Naive thymus-derived CD4-positive, alpha-beta T cell (primary cell): ENCODE measurements at regions of chrX and their contacts with region 1.

Region 1: DNA sequence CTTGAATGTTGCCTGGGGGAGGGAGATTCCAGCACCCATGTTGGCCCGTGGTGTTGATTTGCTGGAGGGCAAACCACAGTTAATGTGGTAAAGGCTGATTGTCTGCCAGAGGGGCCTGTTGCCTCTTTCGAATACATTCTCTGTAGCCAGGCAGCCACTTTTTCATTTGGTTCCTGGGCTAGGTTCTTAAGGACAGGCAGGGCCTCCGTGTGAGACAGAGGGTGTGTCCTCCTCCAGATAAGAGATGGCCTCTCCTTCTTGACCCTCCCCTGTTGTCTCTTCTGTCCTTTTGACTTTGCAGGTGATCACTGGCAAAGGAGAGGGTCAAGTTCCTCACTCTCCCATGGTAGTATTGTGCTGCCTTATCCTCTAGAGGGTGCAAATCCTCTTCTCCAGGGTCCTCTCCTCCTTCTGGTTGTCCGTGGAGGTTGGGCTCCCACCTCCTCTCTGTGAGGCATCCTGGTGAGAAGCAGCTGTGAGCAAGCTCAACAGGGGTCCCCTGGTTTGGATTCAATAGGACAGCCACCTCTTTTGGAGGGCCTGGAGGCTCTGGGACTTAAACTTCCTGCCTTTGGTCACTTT is 44.9 kb downstream of the ZNF182 start:
- DNase-seq: peak in 7 of 9 donors; percentile 17 to 53 (median 28)
- ATAC-seq: peak; percentile 79
- H3K4me3 ChIP-seq: no peak overlapping the region
- H3K4me3 Mint-ChIP-seq: no peak overlapping the region
- H3K27ac ChIP-seq: no peak overlapping the region
- H3K27ac Mint-ChIP-seq: no peak overlapping the region
- H3K4me1 ChIP-seq: no peaks in the 10 kb centered on the region
- H3K4me1 Mint-ChIP-seq: peaks cover 0 to 3% (median 0%) of the 10 kb centered on the region in 7 donors
- H3K27me3 ChIP-seq: no peaks in the 10 kb centered on the region
- H3K27me3 Mint-ChIP-seq: no peaks in the 10 kb centered on the region

Region 2: GRCh38 chrX:47836164-47837072 is 122.4 kb before region 1 on chrX and contains the start of gene ZNF81:
- CTCF ChIA-PET with region 1: no interaction called
- POLR2A ChIA-PET with region 1: no interaction called
- intact Hi-C with region 1: loop called (anchors 2 to 10 kb)
- DNase-seq: peak; percentile 73 to 91 (median 83)
- ATAC-seq: peak; percentile 96
- H3K4me3 ChIP-seq: peak within 1 kb of the TSS; percentile 67
- H3K4me3 Mint-ChIP-seq: peak within 1 kb of the TSS; percentile 96 to 99 (median 98)
- H3K27ac ChIP-seq: peak within 1 kb of the TSS; percentile 79
- H3K27ac Mint-ChIP-seq: peak within 1 kb of the TSS; percentile 94 to 99 (median 97)
- H3K4me1 ChIP-seq: peaks cover 4 to 6% of the 10 kb centered on the region in 2 donors
- H3K4me1 Mint-ChIP-seq: peaks cover 1 to 36% (median 26%) of the 10 kb centered on the region in 7 donors
- H3K27me3 ChIP-seq: no peaks in the 10 kb centered on the region
- H3K27me3 Mint-ChIP-seq: no peaks in the 10 kb centered on the region
- total RNA-seq, gene ZNF81: 11.0 to 14.7 (median 11.7) TPM

Region 3: GRCh38 chrX:47854474-47854873 is 104.4 kb before region 1 on chrX:
- CTCF ChIA-PET with region 1: no interaction called
- POLR2A ChIA-PET with region 1: no interaction called
- intact Hi-C with region 1: loop called in 1 of 2 experiments (anchors 2 kb)
- DNase-seq: peak in 7 of 9 donors; percentile 10 to 46 (median 32)
- ATAC-seq: peak; percentile 65
- H3K4me3 ChIP-seq: no peak overlapping the region
- H3K4me3 Mint-ChIP-seq: no peak overlapping the region
- H3K27ac ChIP-seq: no peak overlapping the region
- H3K27ac Mint-ChIP-seq: peak overlapping the region in 2 of 9 donors; percentile 11 to 51
- H3K4me1 ChIP-seq: no peaks in the 10 kb centered on the region
- H3K4me1 Mint-ChIP-seq: peaks cover 0 to 6% (median 4%) of the 10 kb centered on the region in 7 donors
- H3K27me3 ChIP-seq: no peaks in the 10 kb centered on the region
- H3K27me3 Mint-ChIP-seq: no peaks in the 10 kb centered on the region

Region 4: GRCh38 chrX:47900833-47901232 is 58.0 kb before region 1 on chrX:
- CTCF ChIA-PET with region 1: no interaction called
- POLR2A ChIA-PET with region 1: no interaction called
- intact Hi-C with region 1: no loop called
- DNase-seq: no peak
- ATAC-seq: no peak
- H3K4me3 ChIP-seq: no peak overlapping the region
- H3K4me3 Mint-ChIP-seq: no peak overlapping the region
- H3K27ac ChIP-seq: no peak overlapping the region
- H3K27ac Mint-ChIP-seq: no peak overlapping the region
- H3K4me1 ChIP-seq: no peaks in the 10 kb centered on the region
- H3K4me1 Mint-ChIP-seq: peaks cover 0 to 2% (median 0%) of the 10 kb centered on the region in 7 donors
- H3K27me3 ChIP-seq: no peaks in the 10 kb centered on the region
- H3K27me3 Mint-ChIP-seq: no peaks in the 10 kb centered on the region

Region 5: GRCh38 chrX:47918274-47918673 is 40.6 kb before region 1 on chrX:
- CTCF ChIA-PET with region 1: no interaction called
- POLR2A ChIA-PET with region 1: no interaction called
- intact Hi-C with region 1: no loop called
- DNase-seq: no peak
- ATAC-seq: no peak
- H3K4me3 ChIP-seq: no peak overlapping the region
- H3K4me3 Mint-ChIP-seq: no peak overlapping the region
- H3K27ac ChIP-seq: no peak overlapping the region
- H3K27ac Mint-ChIP-seq: no peak overlapping the region
- H3K4me1 ChIP-seq: no peaks in the 10 kb centered on the region
- H3K4me1 Mint-ChIP-seq: no peaks in the 10 kb centered on the region
- H3K27me3 ChIP-seq: no peaks in the 10 kb centered on the region
- H3K27me3 Mint-ChIP-seq: no peaks in the 10 kb centered on the region

Region 6: DNA sequence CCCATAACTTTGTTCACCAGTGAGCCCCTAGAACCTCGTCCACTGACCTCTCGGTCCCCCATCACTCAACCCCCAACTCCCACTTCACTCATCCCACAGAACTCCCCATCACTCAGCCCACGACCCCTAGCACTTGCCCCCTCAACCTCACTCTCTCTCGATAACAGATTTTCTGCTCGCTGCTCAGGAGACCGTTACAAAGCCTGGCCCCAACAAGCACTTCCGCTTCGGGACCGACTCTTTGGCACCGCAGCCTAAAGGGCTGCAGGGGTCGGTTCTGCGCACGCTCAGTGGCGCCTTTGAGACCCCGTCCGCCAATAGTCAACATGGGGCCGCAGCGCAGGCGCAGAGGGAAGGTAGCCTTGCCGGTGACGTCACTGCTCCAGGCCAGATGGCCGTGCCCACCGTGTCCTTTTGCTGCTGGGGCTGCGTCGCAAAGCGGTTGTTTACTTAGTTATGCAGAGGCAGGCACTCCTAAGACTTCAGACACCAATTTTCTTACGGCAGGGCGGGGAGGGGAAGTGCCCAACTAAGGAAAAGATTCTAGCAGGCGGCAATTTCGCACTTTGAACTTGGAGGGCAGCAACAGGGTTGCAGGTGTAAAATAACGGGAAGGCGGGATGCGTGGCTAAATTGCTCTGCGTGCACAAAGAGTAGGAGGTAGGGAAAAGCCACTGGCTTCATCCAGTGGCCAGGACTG is 45.1 kb after region 1 on chrX and contains the start of gene ZNF182:
- CTCF ChIA-PET with region 1: no interaction called
- POLR2A ChIA-PET with region 1: no interaction called
- intact Hi-C with region 1: loop called in 1 of 2 experiments (anchors 5 kb)
- DNase-seq: peak; percentile 83 to 93 (median 89)
- ATAC-seq: peak; percentile 94
- H3K4me3 ChIP-seq: peak within 1 kb of the TSS; percentile 90
- H3K4me3 Mint-ChIP-seq: peak within 1 kb of the TSS; percentile 91 to 99 (median 96)
- H3K27ac ChIP-seq: peak within 1 kb of the TSS; percentile 74
- H3K27ac Mint-ChIP-seq: peak within 1 kb of the TSS; percentile 96 to 100 (median 99)
- H3K4me1 ChIP-seq: peaks cover 0 to 10% of the 10 kb centered on the region in 2 donors
- H3K4me1 Mint-ChIP-seq: peaks cover 7 to 34% (median 28%) of the 10 kb centered on the region in 7 donors
- H3K27me3 ChIP-seq: no peaks in the 10 kb centered on the region
- H3K27me3 Mint-ChIP-seq: no peaks in the 10 kb centered on the region
- total RNA-seq, gene ZNF182: 6.6 to 16.7 (median 9.0) TPM